ENCODE measurements at regions of chr1 and their contacts with region 1.

Region 1: GRCh38 chr1:77825131-77825709 is 45.8 kb downstream of the MIGA1 start:
- DNase-seq: peak in 1 of 2 donors; percentile 28
- ATAC-seq: peak; percentile 39 to 80 (median 68)
- H3K4me3 ChIP-seq: no peak overlapping the region
- H3K27ac ChIP-seq: peak overlapping the region in 6 of 10 donors; percentile 0 to 23 (median 16)
- H3K4me1 ChIP-seq: peaks cover 0 to 27% (median 16%) of the 10 kb centered on the region in 9 donors
- H3K27me3 ChIP-seq: no peaks in the 10 kb centered on the region
- CTCF ChIP-seq: peak in 7 of 9 donors; percentile 17 to 55 (median 45)

Region 2: GRCh38 chr1:77779529-77780281 is 45.5 kb before region 1 on chr1 and contains the start of gene MIGA1:
- intact Hi-C with region 1: loop called in 1 of 10 experiments (anchors 5 kb)
- DNase-seq: peak; percentile 80 to 94
- ATAC-seq: peak; percentile 97 to 99 (median 99)
- H3K4me3 ChIP-seq: peak within 1 kb of the TSS; percentile 68 to 95 (median 87)
- H3K27ac ChIP-seq: peak within 1 kb of the TSS in 9 of 10 donors; percentile 27 to 88 (median 76)
- H3K4me1 ChIP-seq: peaks cover 0 to 25% (median 19%) of the 10 kb centered on the region in 9 donors
- H3K27me3 ChIP-seq: no peaks in the 10 kb centered on the region
- CTCF ChIP-seq: no peak
- total RNA-seq, gene MIGA1: 9.9 to 14.8 (median 12.4) TPM

Region 3: GRCh38 chr1:77888081-77888780 is 63.0 kb after region 1 on chr1 and contains the start of gene NEXN:
- intact Hi-C with region 1: loop called in 4 of 10 experiments (anchors 5 to 10 kb)
- DNase-seq: peak; percentile 83 to 84
- ATAC-seq: peak; percentile 85 to 93 (median 92)
- H3K4me3 ChIP-seq: peak within 1 kb of the TSS; percentile 49 to 91 (median 72)
- H3K27ac ChIP-seq: peak within 1 kb of the TSS; percentile 86 to 99 (median 98)
- H3K4me1 ChIP-seq: peaks cover 0 to 11% (median 3%) of the 10 kb centered on the region in 9 donors
- H3K27me3 ChIP-seq: peaks cover 0 to 14% (median 0%) of the 10 kb centered on the region in 7 donors
- CTCF ChIP-seq: peak in 1 of 9 donors; percentile 13
- total RNA-seq, gene NEXN: 248 to 479 (median 396) TPM

Region 4: GRCh38 chr1:77900687-77901293 is 75.6 kb after region 1 on chr1:
- intact Hi-C with region 1: loop called in 2 of 10 experiments (anchors 5 kb)
- DNase-seq: no peak
- ATAC-seq: peak in 7 of 8 donors; percentile 62 to 75 (median 70)
- H3K4me3 ChIP-seq: peak overlapping the region in 5 of 10 donors; percentile 14 to 28 (median 23)
- H3K27ac ChIP-seq: peak overlapping the region in 7 of 10 donors; percentile 44 to 73 (median 62)
- H3K4me1 ChIP-seq: peaks cover 0 to 29% (median 7%) of the 10 kb centered on the region in 9 donors
- H3K27me3 ChIP-seq: no peaks in the 10 kb centered on the region
- CTCF ChIP-seq: peak in 8 of 9 donors; percentile 35 to 71 (median 57)

Measured in heart right ventricle (tissue), 16 donors.